ENCODE measurements at regions of chr10 and their contacts with region 1.

Region 1: GRCh38 chr10:73644015-73644743 is 2.9 kb upstream of the MYOZ1 start:
- DNase-seq: peak in 4 of 5 donors; percentile 43 to 60 (median 47)
- ATAC-seq: peak; percentile 12 to 42 (median 26)
- H3K4me3 ChIP-seq: peak overlapping the region in 2 of 12 donors; percentile 4 to 30
- H3K27ac ChIP-seq: peak overlapping the region in 9 of 12 donors; percentile 32 to 99 (median 62)
- H3K4me1 ChIP-seq: peaks cover 3 to 38% (median 23%) of the 10 kb centered on the region in 12 donors
- H3K27me3 ChIP-seq: no peaks in the 10 kb centered on the region
- CTCF ChIP-seq: peak; percentile 74 to 91 (median 86)
- POLR2A ChIP-seq: no peak

Region 2: DNA sequence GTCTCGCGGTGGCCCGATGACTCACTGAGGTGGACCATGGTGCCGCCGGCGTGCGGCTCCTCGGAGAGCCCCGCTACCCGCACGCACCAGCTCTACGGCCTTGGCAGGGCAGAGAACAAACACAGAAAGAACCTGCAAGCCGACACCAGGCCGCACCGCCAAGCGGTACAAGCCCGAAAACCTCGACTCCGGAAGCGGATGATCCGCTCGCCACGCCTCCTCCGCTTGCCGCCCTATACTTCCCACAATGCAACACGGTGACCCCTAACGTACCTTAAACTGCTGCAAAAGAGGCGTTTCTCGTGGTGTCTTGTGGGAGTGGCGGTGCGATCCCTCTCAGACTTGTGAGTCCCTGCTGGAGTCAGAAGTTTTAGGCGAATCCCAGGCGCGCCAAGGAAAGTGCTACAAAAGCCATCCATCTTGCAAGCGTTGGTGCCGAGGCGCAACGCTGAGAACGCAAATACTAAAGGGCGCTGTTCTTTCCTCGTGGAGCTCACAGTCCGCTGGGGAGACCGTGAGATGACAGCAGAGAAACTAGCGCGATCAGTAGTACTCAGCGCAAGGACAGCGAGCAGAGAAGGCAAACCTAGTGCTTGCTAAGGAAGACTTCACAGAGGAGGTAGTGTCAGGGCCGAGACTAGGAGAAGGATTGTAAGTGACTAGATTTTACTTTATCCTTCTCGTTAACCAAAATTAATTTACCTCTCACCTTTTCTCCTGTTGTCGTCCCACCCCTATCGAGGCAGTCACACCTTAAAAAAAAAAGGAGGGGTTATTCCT is 391.5 kb before region 1 on chr10 and contains the start of gene MRPS16:
- intact Hi-C with region 1: loop called in 1 of 10 experiments (anchors 5 kb)
- DNase-seq: peak; percentile 92 to 96 (median 95)
- ATAC-seq: peak; percentile 98 to 99 (median 99)
- H3K4me3 ChIP-seq: peak within 1 kb of the TSS; percentile 64 to 97 (median 84)
- H3K27ac ChIP-seq: peak within 1 kb of the TSS; percentile 75 to 97 (median 88)
- H3K4me1 ChIP-seq: peaks cover 3 to 34% (median 24%) of the 10 kb centered on the region in 12 donors
- H3K27me3 ChIP-seq: no peaks in the 10 kb centered on the region
- CTCF ChIP-seq: peak in 2 of 12 donors; percentile 7 to 10
- POLR2A ChIP-seq: peak in 1 of 2 donors; percentile 79
- total RNA-seq, gene MRPS16: 56.5 to 112 (median 101) TPM

Region 3: GRCh38 chr10:73263948-73264347 is 380.2 kb before region 1 on chr10:
- intact Hi-C with region 1: loop called in 2 of 10 experiments (anchors 5 to 10 kb)
- DNase-seq: no peak
- ATAC-seq: no peak
- H3K4me3 ChIP-seq: no peak overlapping the region
- H3K27ac ChIP-seq: no peak overlapping the region
- H3K4me1 ChIP-seq: no peaks in the 10 kb centered on the region
- H3K27me3 ChIP-seq: no peaks in the 10 kb centered on the region
- CTCF ChIP-seq: peak in 9 of 12 donors; percentile 16 to 51 (median 40)
- POLR2A ChIP-seq: no peak

Region 4: GRCh38 chr10:73529089-73529832 is 114.9 kb before region 1 on chr10:
- intact Hi-C with region 1: loop called (anchors 1 to 2 kb)
- DNase-seq: peak in 2 of 5 donors; percentile 42 to 62
- ATAC-seq: peak; percentile 66 to 91 (median 90)
- H3K4me3 ChIP-seq: no peak overlapping the region
- H3K27ac ChIP-seq: no peak overlapping the region
- H3K4me1 ChIP-seq: peaks cover 0 to 3% (median 0%) of the 10 kb centered on the region in 12 donors
- H3K27me3 ChIP-seq: no peaks in the 10 kb centered on the region
- CTCF ChIP-seq: peak; percentile 73 to 95 (median 87)
- POLR2A ChIP-seq: no peak

Region 5: DNA sequence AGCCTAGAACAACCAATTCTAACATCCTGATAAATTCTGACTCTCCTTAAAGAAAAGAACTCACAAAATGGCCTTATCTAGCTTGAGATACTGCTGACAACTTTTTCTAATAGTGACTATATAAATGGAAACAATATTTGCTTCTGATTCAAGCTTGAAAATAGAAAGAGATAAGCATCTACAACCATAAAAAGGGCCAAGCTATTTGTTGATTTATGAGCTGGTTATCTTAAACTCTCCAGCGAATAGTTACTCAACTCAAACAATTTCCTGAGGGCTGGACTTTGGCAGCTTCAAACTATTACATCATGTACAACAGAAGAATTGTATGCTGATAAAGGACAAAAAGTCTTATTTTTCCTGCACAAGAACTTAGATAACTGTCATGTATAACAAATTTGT is 57.6 kb before region 1 on chr10:
- intact Hi-C with region 1: loop called in 2 of 10 experiments (anchors 5 kb)
- DNase-seq: no peak
- ATAC-seq: peak in 3 of 4 donors; percentile 73 to 81 (median 78)
- H3K4me3 ChIP-seq: no peak overlapping the region
- H3K27ac ChIP-seq: peak overlapping the region in 11 of 12 donors; percentile 4 to 71 (median 54)
- H3K4me1 ChIP-seq: peaks cover 0 to 52% (median 29%) of the 10 kb centered on the region in 12 donors
- H3K27me3 ChIP-seq: no peaks in the 10 kb centered on the region
- CTCF ChIP-seq: no peak
- POLR2A ChIP-seq: no peak

Region 6: GRCh38 chr10:73591935-73592699 is 52.1 kb before region 1 on chr10:
- intact Hi-C with region 1: loop called in 2 of 10 experiments (anchors 5 kb)
- DNase-seq: peak in 4 of 5 donors; percentile 48 to 70 (median 60)
- ATAC-seq: peak; percentile 87 to 90 (median 87)
- H3K4me3 ChIP-seq: peak overlapping the region in 6 of 12 donors; percentile 9 to 37 (median 20)
- H3K27ac ChIP-seq: peak overlapping the region; percentile 8 to 79 (median 68)
- H3K4me1 ChIP-seq: peaks cover 0 to 37% (median 21%) of the 10 kb centered on the region in 12 donors
- H3K27me3 ChIP-seq: no peaks in the 10 kb centered on the region
- CTCF ChIP-seq: no peak
- POLR2A ChIP-seq: peak in 1 of 2 donors; percentile 32